Activated B cell treated with CpG ODN at 0.5 μM for 24 hours (primary cell): ENCODE measurements at regions of chr15 and their contacts with region 1.

Region 1: DNA sequence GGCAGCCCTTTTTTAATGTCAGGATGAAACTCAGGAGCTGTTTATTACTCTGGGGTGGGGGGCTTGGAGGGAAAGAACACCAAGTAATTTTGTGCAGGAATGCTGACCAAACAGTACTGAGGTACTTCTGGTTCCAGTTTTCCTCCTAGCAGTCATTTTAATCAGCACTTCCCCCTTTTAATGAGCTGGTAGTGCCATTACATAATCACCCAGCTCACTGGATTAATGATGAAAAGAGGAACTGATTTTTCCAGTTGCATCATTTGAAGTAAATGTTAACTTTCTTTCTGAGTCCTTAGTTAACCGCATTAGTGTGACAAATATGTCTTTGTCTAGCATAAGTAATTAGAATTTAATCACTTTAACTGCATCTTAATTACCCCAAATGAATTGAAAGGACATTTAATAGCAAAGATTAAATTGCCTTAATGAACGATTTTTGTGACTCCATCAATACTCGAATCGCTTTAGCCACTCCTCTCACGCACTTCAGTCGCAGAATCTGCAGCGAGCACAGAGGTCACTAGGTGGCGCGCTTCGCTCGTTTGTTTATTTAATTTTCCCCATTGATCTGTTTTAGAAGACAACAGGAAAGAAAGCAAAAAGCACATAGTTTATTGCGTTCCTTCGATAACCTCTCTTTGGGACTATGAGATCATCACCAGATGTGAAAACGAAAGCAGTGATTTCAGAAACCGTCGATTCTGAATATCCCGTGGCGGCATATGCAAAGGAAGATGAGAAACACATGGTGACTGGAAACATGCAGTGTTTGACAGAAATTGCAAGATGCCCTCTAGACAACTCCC is 9.8 kb downstream of the ONECUT1 start:
- DNase-seq: peak; percentile 55
- ATAC-seq: peak; percentile 83
- H3K4me3 Mint-ChIP-seq: peak overlapping the region; percentile 81
- H3K27ac Mint-ChIP-seq: peak overlapping the region; percentile 91
- H3K4me1 Mint-ChIP-seq: peaks cover 34% of the 10 kb centered on the region
- H3K27me3 Mint-ChIP-seq: peaks cover 46% of the 10 kb centered on the region
- CTCF ChIP-seq: peak; percentile 97

Region 2: DNA sequence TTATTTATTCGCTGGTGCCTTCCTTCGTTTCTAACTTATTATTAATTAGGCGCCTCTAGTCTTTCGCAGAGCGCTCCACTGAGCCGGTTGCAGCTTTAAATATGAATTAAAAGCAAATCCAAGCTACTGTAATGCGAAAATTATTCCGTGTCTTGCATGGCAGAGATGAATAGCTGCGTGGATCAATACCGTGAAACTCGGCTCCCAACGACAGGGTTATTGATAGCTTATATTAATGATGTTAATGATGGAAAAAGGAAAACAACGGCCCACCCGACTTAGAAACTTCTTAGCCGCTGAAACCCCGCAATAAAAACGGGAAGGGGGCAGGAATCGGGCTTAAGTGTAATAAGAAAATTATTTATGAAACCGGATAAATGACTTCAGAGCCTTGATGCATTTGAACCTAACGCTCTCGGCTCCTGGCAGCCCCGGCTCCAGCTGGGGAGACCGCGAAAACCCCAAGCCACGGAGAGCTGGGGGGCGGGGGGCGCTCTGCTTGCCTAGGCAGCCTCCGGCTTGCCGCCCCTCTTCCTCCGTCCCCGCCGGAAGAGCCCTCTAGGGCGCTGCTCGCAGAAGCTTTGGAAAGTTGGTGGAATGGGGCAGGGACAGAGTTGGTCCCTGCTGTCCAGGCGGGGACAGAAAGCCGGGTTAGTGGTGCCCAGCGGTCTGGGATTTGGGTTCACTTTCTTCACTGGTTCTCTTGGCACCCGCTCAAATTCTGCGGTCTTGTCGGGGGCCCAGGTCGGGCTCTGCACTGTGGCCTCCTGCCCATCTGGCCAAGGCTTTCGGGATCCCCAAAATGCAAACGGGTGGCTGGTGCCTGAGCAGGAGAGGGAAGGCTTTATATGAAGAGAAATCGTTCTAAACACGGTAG is 17.5 kb after region 1 on chr15:
- CTCF ChIA-PET with region 1: interaction called, 13 read pairs
- POLR2A ChIA-PET with region 1: interaction called, 3 read pairs
- intact Hi-C with region 1: loop called (anchors 1 kb)
- DNase-seq: no peak
- ATAC-seq: no peak
- H3K4me3 Mint-ChIP-seq: no peak overlapping the region
- H3K27ac Mint-ChIP-seq: no peak overlapping the region
- H3K4me1 Mint-ChIP-seq: peaks cover 9% of the 10 kb centered on the region
- H3K27me3 Mint-ChIP-seq: peaks cover 80% of the 10 kb centered on the region
- CTCF ChIP-seq: no peak

Region 3: DNA sequence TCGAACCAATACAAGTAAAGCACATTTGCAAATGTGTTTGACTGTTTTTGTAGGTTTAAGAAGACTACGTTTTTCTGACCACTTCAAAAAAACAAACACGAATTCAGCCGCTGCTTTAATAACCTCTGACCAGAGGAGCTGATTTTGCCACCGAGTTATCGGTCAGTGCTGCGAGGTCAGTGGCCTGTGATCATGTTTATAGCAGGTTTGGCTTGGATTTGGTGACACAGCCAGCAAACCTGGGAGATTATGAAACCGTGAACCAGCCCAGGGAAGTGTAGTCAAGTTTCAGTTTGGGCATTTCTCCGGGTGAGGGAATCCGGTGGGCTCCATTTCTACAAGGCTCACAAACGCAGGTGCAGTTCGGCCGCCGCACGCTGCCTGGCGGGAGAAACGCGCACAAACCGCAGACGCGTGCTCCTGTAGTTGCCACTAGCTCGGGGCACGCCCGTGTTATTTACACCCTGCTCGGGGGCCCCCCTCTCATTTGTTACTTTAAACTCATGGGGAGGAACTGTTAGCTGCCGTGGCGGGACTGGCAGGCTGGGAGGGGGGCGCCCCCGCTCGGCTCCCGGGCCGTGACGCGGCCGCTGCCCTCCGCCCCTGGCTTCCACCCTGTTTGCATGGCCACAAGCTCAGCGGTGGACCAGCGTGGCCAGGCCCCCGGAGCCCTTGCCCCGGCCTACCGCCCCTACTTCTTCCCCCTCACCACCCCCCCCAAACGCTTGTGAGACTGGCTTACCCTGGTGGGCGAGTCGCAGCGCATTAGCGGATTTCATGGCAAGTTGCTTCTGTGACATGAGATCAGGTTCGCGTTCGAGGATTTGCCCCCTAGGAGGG is 23.3 kb after region 1 on chr15:
- CTCF ChIA-PET with region 1: interaction called, 4 read pairs
- POLR2A ChIA-PET with region 1: interaction called, 5 read pairs
- intact Hi-C with region 1: loop called (anchors 1 kb)
- DNase-seq: no peak
- ATAC-seq: no peak
- H3K4me3 Mint-ChIP-seq: peak overlapping the region; percentile 75
- H3K27ac Mint-ChIP-seq: no peak overlapping the region
- H3K4me1 Mint-ChIP-seq: peaks cover 23% of the 10 kb centered on the region
- H3K27me3 Mint-ChIP-seq: peaks cover 74% of the 10 kb centered on the region
- CTCF ChIP-seq: no peak

Region 4: GRCh38 chr15:53059273-53060043 is 279.1 kb after region 1 on chr15:
- CTCF ChIA-PET with region 1: no interaction called
- POLR2A ChIA-PET with region 1: no interaction called
- intact Hi-C with region 1: no loop called
- DNase-seq: no peak
- ATAC-seq: no peak
- H3K4me3 Mint-ChIP-seq: no peak overlapping the region
- H3K27ac Mint-ChIP-seq: no peak overlapping the region
- H3K4me1 Mint-ChIP-seq: no peaks in the 10 kb centered on the region
- H3K27me3 Mint-ChIP-seq: no peaks in the 10 kb centered on the region
- CTCF ChIP-seq: no peak

Region 5: DNA sequence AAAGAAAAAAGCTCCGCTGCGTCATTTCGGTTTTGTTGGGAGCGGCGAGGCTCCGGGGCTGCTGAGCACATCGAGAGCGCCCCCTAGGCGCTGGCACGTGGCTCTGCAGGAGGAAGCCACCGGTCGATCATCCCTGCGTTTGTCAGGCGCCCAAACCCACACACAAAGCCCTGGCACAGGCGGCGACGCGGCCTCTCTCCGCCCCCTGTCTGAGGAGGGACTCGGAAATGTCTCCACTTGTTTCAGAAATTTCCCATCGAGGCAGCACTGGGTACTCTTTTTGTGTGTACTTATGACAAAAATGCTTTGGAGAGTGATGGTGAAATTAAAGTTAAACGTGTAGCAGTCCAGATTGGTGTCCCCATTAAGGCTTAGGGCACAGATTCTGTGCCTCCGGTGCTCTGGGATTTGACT is 417.1 kb after region 1 on chr15:
- CTCF ChIA-PET with region 1: no interaction called
- POLR2A ChIA-PET with region 1: no interaction called
- intact Hi-C with region 1: loop called (anchors 10 kb)
- DNase-seq: no peak
- ATAC-seq: no peak
- H3K4me3 Mint-ChIP-seq: no peak overlapping the region
- H3K27ac Mint-ChIP-seq: no peak overlapping the region
- H3K4me1 Mint-ChIP-seq: no peaks in the 10 kb centered on the region
- H3K27me3 Mint-ChIP-seq: peaks cover 10% of the 10 kb centered on the region
- CTCF ChIP-seq: no peak

Region 6: DNA sequence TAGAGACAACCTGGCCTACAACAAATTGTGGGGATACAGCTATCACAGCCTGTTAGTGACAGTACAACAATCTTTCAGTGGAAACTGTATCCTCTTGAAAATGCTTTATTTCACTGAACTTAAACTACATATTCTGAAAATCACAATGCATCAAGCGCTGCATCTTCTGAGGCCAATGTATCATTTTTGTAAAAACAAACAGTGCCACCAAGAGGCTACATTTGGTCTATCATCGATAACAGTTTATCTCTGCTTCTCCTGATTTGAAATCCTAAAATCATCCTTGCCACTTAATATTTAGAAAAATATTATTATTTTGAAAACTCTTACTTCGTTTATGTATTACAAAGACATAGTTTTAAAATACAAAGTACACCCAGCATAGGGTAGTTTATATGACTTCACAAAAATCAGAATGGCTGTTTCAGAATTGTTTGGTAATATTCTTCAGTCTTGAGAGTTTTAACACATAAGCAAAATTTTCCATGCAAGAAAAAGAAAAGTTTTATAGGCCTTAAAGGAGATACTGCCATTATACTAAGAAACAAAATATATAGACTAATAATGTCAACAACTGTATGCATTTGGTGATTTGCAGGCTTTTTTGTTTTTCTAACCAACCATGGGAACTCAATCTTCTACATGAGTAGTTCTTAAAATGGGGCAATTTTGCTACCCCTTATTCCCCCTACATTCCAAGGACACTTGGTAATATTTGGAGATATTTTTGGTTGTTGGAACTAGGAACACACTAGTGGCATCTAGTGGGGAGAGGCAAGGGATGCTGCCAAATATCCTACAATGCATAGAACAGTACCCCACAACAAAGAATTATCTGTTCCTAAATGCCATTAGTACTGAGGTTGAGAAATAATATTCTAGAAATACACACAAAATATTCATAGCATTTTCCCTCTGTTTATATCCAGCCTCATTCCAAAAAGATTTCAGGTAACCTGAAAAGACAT is 936.8 kb after region 1 on chr15:
- CTCF ChIA-PET with region 1: no interaction called
- POLR2A ChIA-PET with region 1: no interaction called
- intact Hi-C with region 1: loop called (anchors 10 kb)
- DNase-seq: no peak
- ATAC-seq: no peak
- H3K4me3 Mint-ChIP-seq: no peak overlapping the region
- H3K27ac Mint-ChIP-seq: no peak overlapping the region
- H3K4me1 Mint-ChIP-seq: no peaks in the 10 kb centered on the region
- H3K27me3 Mint-ChIP-seq: no peaks in the 10 kb centered on the region
- CTCF ChIP-seq: no peak